GM10248 (cell line): ENCODE measurements at regions of chr18 and their contacts with region 1.

Region 1: GRCh38 chr18:45608400-45608799 is 6.9 kb upstream of the SLC14A2 start:
- DNase-seq: no peak
- CTCF ChIP-seq: no peak

Region 2: DNA sequence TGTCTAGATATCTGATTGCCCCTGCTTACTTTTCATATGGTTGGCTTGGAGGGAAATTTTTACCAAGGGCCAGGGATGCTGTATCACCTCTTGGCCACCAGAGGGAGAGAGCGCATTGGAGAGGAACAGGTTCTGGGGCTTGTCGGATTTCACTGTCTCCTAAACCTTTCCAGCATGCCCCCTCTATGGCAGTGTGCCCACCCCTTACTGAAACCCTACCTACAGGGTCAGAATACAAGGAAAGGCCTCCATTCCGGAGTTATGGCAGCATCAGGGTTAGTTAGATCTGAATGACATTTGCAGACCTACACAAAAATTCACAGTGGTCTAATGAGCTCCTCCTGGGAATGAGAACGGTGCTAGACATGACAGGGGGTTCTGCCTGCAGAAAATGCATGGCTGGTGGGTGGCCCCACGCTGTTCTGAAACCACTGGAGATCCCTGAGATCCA is 12.7 kb after region 1 on chr18:
- CTCF ChIA-PET with region 1: interaction called, 14 read pairs
- POLR2A ChIA-PET with region 1: no interaction called
- DNase-seq: peak; percentile 69
- CTCF ChIP-seq: peak; percentile 80

Region 3: GRCh38 chr18:45755934-45756333 is 147.5 kb after region 1 on chr18:
- CTCF ChIA-PET with region 1: no interaction called
- POLR2A ChIA-PET with region 1: no interaction called
- DNase-seq: no peak
- CTCF ChIP-seq: no peak